Caco-2 (cell line): ENCODE measurements at regions of chr9 and their contacts with region 1.

Region 1: DNA sequence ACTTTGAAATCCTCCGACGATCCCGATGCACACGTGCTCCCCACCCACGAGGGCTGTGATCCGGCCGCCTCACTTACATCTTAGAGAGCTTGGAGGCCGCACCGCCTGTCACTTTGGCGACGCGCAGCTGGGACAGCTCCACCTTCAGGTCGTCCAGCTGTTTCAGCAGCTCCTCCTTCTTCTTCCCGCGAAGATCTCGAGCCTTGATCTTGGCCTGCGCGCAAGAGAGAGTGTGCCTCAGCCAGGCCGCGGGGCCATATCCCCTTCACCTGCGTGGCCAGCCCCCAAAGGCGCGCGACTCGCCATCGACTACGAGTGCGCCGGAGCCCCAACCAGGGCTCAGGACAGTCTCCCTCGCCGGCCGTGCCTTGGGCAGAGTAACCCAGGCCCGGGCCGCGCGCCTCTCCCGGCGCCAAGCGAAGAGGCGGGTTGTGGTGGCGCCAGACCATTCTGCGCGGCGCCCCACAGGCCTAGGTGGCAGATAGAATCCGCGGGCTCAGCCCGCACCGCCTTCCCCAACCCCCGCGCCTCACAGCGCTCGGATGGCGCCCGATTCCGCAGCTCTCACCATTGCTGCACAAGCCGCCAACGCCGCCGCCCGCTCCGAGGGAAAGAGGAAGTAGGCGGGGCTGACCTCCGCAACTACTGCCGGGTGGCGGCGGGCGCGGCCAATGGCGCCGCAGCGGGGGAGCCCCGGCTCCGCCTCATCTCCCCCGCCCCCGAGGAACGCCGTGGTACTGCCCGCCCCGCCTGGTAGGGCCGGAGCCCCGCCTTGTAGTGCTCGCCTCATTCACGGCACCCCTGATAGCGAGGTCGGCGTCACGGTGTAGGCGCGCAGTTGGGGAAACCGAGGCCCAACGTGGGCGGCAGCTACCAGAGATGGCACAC is at the starts of genes ARPC5L and RPL35:
- DNase-seq: peak; percentile 95 to 97
- H3K4me3 ChIP-seq: peak within 1 kb of the TSS; percentile 85
- H3K4me3 Mint-ChIP-seq: peak within 1 kb of the TSS; percentile 85
- H3K27ac Mint-ChIP-seq: peak within 1 kb of the TSS; percentile 95
- H3K4me1 ChIP-seq: peaks cover 10% of the 10 kb centered on the region; the same call in 1 of the 2 replicates
- H3K4me1 Mint-ChIP-seq: peaks cover 7% of the 10 kb centered on the region
- H3K27me3 ChIP-seq: no peaks in the 10 kb centered on the region
- H3K27me3 Mint-ChIP-seq: no peaks in the 10 kb centered on the region
- CTCF ChIP-seq: peak in 1 of 2 experiments; percentile 30
- total RNA-seq, gene ARPC5L: 59.0 and 60.1 TPM in 2 replicates
- total RNA-seq, gene RPL35: 1,528 and 1,598 TPM in 2 replicates

Region 2: DNA sequence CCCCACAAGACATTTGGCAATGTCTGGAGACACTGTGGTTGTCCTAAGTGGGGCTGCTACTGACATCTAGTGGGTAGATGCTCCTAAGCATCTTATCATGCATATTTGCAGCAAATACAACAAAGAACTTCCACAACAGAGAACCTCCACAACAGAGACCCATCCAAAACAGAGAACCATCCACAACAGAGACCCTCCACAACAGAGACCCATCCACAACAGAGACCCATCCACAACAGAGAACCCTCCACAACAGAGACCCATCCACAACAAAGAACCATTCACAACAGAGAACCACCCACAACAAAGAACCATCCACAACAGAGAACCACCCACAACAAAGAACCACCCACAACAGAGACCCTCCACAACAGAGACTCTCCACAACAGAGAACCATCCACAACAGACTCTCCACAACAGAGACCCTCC is 33.2 kb after region 1 on chr9:
- CTCF ChIA-PET with region 1: no interaction called
- POLR2A ChIA-PET with region 1: no interaction called
- intact Hi-C with region 1: loop called (anchors 1 kb)
- DNase-seq: peak in 1 of 2 experiments; percentile 43
- H3K4me3 ChIP-seq: no peak overlapping the region
- H3K4me3 Mint-ChIP-seq: no peak overlapping the region
- H3K27ac Mint-ChIP-seq: no peak overlapping the region
- H3K4me1 ChIP-seq: peaks cover 16% of the 10 kb centered on the region
- H3K4me1 Mint-ChIP-seq: no peaks in the 10 kb centered on the region
- H3K27me3 ChIP-seq: no peaks in the 10 kb centered on the region
- H3K27me3 Mint-ChIP-seq: no peaks in the 10 kb centered on the region
- CTCF ChIP-seq: peak; percentile 40 to 52